ENCODE measurements at regions of chr1 and their contacts with region 1.

Region 1: DNA sequence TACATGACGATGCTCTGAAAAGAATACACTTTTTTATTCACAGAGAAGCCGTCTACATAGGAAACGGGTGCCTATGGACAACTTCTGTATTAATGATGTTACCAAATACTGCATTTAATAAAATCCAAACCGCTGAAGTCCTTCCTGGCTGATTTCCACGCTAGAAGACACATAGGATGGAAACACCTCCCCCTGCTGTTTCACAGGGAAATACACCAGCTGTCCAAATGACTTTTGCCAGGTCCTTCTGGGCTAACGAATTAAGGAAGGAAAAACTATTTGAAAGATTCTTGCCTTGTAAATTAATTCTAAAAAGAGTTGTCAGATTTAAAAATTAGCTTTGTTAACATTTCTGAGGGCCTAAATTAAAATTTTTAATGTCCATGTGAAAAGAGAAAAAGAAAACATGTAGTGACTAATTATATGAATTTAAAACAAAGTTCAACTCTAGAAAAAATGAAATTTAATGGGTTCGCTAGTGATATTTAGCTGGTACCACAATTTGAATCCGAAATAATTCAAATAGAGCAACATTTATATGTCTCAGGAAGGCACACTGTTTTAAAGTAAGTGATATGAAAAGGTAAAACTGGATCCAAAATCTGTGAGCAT is 146.0 kb downstream of the RERE start:
- DNase-seq: peak; percentile 22
- ATAC-seq: peak; percentile 69
- H3K4me3 ChIP-seq: no peak overlapping the region
- H3K27ac ChIP-seq: no peak overlapping the region
- H3K4me1 ChIP-seq: peaks cover 4 to 9% of the 10 kb centered on the region in 2 experiments
- H3K27me3 ChIP-seq: no peaks in the 10 kb centered on the region
- CTCF ChIP-seq: peak; percentile 61 to 79 (median 75); a peak in 5 of 6 replicates
- POLR2A ChIP-seq: no peak
- RAD21 ChIP-seq: peak; percentile 74

Region 2: GRCh38 chr1:8448911-8449661 is 222.3 kb before region 1 on chr1:
- CTCF ChIA-PET with region 1: no interaction called
- POLR2A ChIA-PET with region 1: no interaction called
- RAD21 ChIA-PET with region 1: no interaction called
- intact Hi-C with region 1: no loop called
- DNase-seq: no peak
- ATAC-seq: no peak
- H3K4me3 ChIP-seq: no peak overlapping the region
- H3K27ac ChIP-seq: no peak overlapping the region
- H3K4me1 ChIP-seq: peaks cover 0 to 10% of the 10 kb centered on the region in 2 experiments; a peak in 1 of 4 replicates
- H3K27me3 ChIP-seq: no peaks in the 10 kb centered on the region
- CTCF ChIP-seq: no peak
- POLR2A ChIP-seq: no peak
- RAD21 ChIP-seq: no peak

Region 3: DNA sequence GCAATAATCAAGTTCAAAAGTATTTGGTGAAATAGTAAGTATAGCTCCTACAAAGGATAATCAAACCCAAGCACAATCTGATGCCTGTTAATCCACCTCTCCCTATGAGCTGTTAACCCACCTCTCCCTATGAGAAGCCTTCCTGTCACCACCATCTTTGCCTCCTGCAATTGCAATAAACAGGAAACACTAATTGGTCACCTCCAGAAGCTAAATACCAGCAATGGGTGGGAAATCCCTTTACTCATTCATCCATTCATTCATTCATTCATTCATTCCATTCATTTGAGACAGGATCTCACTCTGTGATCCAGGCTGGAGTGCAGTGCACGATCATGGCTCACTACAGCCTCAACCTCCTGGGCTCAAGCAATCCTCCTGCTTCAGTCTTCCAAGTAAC is 13.2 kb after region 1 on chr1:
- CTCF ChIA-PET with region 1: interaction called, 12 read pairs
- POLR2A ChIA-PET with region 1: no interaction called
- RAD21 ChIA-PET with region 1: no interaction called
- intact Hi-C with region 1: no loop called
- DNase-seq: no peak
- ATAC-seq: no peak
- H3K4me3 ChIP-seq: no peak overlapping the region
- H3K27ac ChIP-seq: no peak overlapping the region
- H3K4me1 ChIP-seq: no peaks in the 10 kb centered on the region
- H3K27me3 ChIP-seq: no peaks in the 10 kb centered on the region
- CTCF ChIP-seq: no peak
- POLR2A ChIP-seq: no peak
- RAD21 ChIP-seq: no peak

Measured in HCT116 (cell line).